ENCODE measurements at regions of chr3 and their contacts with region 1.

Region 1: GRCh38 chr3:172522871-172523818 is at the start of gene TNFSF10:
- DNase-seq: peak; percentile 90
- ATAC-seq: peak; percentile 87
- H3K4me3 Mint-ChIP-seq: peak within 1 kb of the TSS; percentile 93
- H3K27ac Mint-ChIP-seq: peak within 1 kb of the TSS; percentile 94
- H3K4me1 Mint-ChIP-seq: peaks cover 42% of the 10 kb centered on the region
- H3K27me3 Mint-ChIP-seq: no peaks in the 10 kb centered on the region
- total RNA-seq, gene TNFSF10: 106 to 108 TPM

Region 2: GRCh38 chr3:172511783-172512762 is 11.1 kb before region 1 on chr3:
- CTCF ChIA-PET with region 1: interaction called, 5 read pairs
- POLR2A ChIA-PET with region 1: interaction called, 24 read pairs
- DNase-seq: peak; percentile 75
- ATAC-seq: peak; percentile 71
- H3K4me3 Mint-ChIP-seq: peak overlapping the region; percentile 68
- H3K27ac Mint-ChIP-seq: peak overlapping the region; percentile 90
- H3K4me1 Mint-ChIP-seq: peaks cover 88% of the 10 kb centered on the region
- H3K27me3 Mint-ChIP-seq: no peaks in the 10 kb centered on the region

Region 3: DNA sequence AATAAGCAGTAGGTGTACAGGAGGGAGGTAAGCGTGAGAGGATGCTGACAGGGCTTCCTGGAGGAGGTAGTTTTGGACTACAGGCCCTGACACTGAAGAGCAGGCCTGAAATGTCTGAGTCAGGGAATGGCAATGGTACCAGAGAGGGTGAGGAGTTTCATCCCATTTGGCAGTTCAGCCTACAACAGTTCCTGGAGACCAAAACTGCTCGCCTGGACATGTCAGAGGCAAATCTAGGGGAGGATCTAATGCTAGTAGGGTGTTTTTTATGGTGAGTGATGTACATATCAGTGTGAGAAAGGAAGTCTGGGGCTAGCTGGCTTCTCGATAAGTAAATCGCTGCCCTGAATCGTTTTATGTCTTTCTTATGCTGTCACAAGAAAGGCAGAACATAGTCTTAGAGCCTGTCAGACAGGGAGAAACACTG is 13.9 kb after region 1 on chr3:
- CTCF ChIA-PET with region 1: interaction called, 5 read pairs
- POLR2A ChIA-PET with region 1: interaction called, 28 read pairs
- DNase-seq: no peak
- ATAC-seq: peak; percentile 66
- H3K4me3 Mint-ChIP-seq: peak overlapping the region; percentile 12
- H3K27ac Mint-ChIP-seq: peak overlapping the region; percentile 96
- H3K4me1 Mint-ChIP-seq: peaks cover 67% of the 10 kb centered on the region
- H3K27me3 Mint-ChIP-seq: no peaks in the 10 kb centered on the region

Region 4: DNA sequence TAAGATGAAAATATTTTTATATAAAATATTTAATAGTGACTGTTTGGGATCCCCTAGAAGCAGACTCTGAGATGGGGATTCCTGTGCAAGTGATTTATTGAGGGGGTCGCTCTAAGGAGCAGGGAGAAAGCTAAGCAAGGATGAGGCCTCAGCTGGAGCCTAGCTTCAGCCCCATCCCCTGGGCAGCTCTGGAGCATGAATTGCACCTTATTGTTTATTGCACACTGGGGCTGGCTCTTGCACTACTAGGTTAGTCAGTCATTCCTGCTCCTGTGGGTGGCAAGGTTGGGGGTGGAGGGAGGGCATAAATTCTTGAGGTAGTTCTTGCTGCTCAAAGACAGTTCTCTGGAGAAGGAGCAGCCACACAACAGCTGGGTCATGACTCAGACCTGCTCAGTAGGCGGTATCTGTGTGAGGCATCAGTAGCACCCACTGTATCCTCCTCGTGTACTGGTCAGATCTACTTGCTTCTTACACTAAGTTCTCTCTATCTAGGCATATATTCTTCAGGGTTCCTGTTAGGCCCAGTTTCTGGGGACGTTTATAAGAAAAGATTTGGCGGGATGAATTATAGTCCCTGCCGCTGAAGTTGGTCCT is 27.3 kb after region 1 on chr3:
- CTCF ChIA-PET with region 1: interaction called, 3 read pairs
- POLR2A ChIA-PET with region 1: interaction called, 16 read pairs
- DNase-seq: peak; percentile 77
- ATAC-seq: peak; percentile 98
- H3K4me3 Mint-ChIP-seq: no peak overlapping the region
- H3K27ac Mint-ChIP-seq: peak overlapping the region; percentile 66
- H3K4me1 Mint-ChIP-seq: peaks cover 53% of the 10 kb centered on the region
- H3K27me3 Mint-ChIP-seq: no peaks in the 10 kb centered on the region

Region 5: DNA sequence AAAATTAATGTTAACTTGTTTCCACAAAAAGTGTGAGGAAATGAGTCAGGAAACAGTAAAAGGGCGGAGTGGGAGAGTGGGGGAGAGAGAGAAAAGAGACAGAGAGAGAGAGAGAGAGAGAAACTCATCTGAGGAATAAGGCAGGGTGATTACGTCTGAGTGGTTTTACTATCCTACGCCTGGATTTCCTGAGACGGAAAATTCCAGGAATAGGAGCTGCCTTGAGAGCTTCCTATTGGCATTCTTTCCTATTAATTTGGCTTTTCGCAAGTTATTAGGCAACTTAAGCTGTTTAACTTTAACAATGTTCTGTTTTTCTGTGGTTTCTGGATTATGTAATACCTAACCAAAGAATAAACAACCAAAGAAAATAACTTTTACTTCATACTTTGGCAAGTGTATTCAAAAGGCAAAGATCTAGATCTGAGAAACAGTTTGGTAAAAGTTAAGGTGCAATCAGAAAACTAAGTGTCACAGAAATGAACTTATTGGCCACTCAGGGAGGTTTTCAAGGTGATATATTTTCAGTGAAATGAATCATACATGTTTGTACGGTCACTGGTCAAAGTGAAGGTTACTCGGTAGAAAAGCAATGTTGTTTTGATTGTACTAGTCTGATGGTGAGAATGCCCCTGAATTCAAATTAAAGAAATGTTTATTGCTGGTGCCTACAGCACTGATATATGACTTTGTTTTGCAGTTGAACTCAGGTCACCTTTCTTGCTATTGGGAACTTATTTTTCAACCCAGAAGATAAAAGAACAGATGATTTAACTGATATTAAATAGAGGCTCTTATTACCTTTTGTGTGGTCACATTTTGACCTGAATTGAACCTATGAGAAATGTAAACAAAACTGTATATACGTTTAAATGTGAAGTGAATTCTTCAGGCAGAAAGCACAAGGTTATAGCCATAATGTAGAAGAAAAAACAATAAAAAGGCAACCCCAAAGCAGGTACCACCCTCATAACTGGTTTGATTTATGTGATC is 40.0 kb after region 1 on chr3:
- CTCF ChIA-PET with region 1: interaction called, 4 read pairs
- POLR2A ChIA-PET with region 1: interaction called, 18 read pairs
- DNase-seq: no peak
- ATAC-seq: no peak
- H3K4me3 Mint-ChIP-seq: peak overlapping the region; percentile 42
- H3K27ac Mint-ChIP-seq: peak overlapping the region; percentile 69
- H3K4me1 Mint-ChIP-seq: peaks cover 30% of the 10 kb centered on the region
- H3K27me3 Mint-ChIP-seq: no peaks in the 10 kb centered on the region

Region 6: DNA sequence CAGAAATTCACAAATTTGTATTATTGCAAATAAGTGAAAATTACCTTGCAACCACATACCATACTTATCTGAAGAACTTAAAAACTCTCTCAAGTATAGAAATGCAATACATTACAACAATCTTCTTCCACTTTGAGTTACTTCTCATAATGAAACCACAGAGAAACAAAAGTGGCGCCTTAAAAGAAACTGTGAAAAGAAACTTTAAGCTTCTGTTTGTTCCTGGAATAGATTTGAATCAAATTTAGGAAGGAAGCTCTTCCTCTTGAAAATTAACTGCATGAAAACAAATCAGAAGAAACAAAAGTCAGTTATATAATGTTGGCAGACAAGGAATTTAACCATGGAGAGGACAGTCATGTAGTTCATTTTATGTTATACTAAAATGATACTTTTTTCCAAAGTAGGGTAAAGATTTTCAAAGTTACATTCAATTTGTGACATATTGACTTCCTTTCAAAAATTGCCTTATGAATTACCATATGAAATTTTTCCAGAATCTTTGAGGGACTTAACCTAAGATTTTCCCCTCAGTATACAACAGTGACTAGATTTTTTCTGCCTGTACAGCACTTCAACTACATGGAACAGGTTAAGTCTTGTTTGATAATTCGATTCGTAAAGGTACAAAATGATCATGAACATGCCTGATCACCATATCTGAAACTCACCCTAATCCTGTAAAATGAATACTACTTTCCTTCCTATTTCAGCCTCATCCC is 57.7 kb after region 1 on chr3:
- CTCF ChIA-PET with region 1: interaction called, 11 read pairs
- POLR2A ChIA-PET with region 1: interaction called, 23 read pairs
- DNase-seq: no peak
- ATAC-seq: peak; percentile 35
- H3K4me3 Mint-ChIP-seq: peak overlapping the region; percentile 67
- H3K27ac Mint-ChIP-seq: peak overlapping the region; percentile 92
- H3K4me1 Mint-ChIP-seq: peaks cover 97% of the 10 kb centered on the region
- H3K27me3 Mint-ChIP-seq: no peaks in the 10 kb centered on the region

Region 7: DNA sequence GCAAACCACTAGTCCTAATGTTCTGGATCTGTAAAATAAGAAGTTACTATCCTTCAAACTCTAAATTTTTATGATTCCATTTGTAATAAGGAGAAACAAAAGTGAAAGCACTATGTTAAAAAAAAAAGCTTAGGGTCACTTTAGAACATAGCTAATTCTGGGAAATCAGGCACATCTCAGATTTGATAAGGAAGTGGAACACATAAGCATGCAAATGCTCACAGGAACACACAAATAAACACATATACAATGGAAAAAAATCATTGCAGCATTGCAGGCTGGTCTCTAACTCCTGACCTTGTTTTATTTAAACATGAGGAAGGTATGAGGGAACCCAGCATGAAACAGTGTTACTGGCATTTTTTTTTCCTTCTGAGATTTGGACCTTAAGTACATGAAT is 63.3 kb after region 1 on chr3:
- CTCF ChIA-PET with region 1: interaction called, 214 read pairs
- POLR2A ChIA-PET with region 1: interaction called, 138 read pairs
- DNase-seq: no peak
- ATAC-seq: peak; percentile 57
- H3K4me3 Mint-ChIP-seq: no peak overlapping the region
- H3K27ac Mint-ChIP-seq: peak overlapping the region; percentile 1
- H3K4me1 Mint-ChIP-seq: peaks cover 89% of the 10 kb centered on the region
- H3K27me3 Mint-ChIP-seq: no peaks in the 10 kb centered on the region

Region 8: DNA sequence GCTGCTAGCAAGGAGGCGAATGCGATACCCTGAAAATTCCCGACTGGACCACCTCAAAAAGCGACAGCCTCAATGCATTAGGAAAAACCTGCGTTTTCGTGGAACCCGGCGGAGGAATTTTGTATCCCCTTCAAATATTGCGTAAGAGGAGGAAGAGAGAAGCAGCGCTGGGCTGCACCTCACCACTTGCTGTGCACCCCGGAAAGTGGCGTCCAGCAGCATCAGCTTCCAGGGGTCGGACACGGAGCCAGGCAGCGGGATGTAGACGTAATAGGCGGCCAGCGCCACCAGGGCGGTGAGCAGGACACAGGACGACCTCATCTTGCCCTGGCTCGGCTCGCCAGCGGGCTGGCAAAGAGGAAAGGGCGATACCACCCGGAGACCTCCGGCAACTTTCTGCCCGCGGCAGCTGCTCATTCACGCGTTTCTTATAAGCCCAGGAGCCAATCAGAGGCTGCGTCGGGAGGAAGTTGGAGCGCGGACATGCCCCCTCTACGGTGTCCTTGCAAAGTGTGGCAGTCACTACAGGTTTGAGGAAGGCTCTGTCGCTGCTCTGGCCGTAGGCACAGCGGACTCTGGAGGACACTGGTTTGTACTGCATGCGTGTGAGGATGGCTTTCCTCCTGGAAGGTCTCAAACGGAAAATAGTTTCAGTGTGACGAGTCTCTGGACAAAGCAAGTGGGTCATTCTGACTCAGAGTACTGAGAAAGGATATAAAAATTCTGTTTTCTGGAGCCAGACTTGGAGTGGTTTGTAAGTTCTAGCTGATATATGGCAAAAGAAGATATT is 187.7 kb after region 1 on chr3 and contains the start of gene NCEH1:
- CTCF ChIA-PET with region 1: no interaction called
- POLR2A ChIA-PET with region 1: no interaction called
- DNase-seq: peak; percentile 88
- ATAC-seq: peak; percentile 99
- H3K4me3 Mint-ChIP-seq: peak within 1 kb of the TSS; percentile 92
- H3K27ac Mint-ChIP-seq: peak within 1 kb of the TSS; percentile 73
- H3K4me1 Mint-ChIP-seq: peaks cover 18% of the 10 kb centered on the region
- H3K27me3 Mint-ChIP-seq: peaks cover 3% of the 10 kb centered on the region
- total RNA-seq, gene NCEH1: 8.0 to 8.2 TPM